Endothelial cell of umbilical vein (primary cell): ENCODE measurements at regions of chr3 and their contacts with region 1.

Region 1: GRCh38 chr3:185677146-185677829 is 91.2 kb downstream of the SENP2 start:
- DNase-seq: peak; percentile 81
- H3K4me3 ChIP-seq: no peak overlapping the region
- H3K27ac ChIP-seq: peak overlapping the region; percentile 36
- H3K4me1 ChIP-seq: peaks cover 7% of the 10 kb centered on the region
- H3K27me3 ChIP-seq: no peaks in the 10 kb centered on the region
- CTCF ChIP-seq: peak; percentile 67 to 70
- POLR2A ChIP-seq: no peak

Region 2: GRCh38 chr3:183868796-183869195 is 1808.5 kb before region 1 on chr3:
- CTCF ChIA-PET with region 1: no interaction called
- POLR2A ChIA-PET with region 1: no interaction called
- dilution Hi-C with region 1: no loop called
- intact Hi-C with region 1: no loop called
- DNase-seq: no peak
- H3K4me3 ChIP-seq: no peak overlapping the region
- H3K27ac ChIP-seq: no peak overlapping the region
- H3K4me1 ChIP-seq: no peaks in the 10 kb centered on the region
- H3K27me3 ChIP-seq: no peaks in the 10 kb centered on the region
- CTCF ChIP-seq: no peak
- POLR2A ChIP-seq: no peak

Region 3: DNA sequence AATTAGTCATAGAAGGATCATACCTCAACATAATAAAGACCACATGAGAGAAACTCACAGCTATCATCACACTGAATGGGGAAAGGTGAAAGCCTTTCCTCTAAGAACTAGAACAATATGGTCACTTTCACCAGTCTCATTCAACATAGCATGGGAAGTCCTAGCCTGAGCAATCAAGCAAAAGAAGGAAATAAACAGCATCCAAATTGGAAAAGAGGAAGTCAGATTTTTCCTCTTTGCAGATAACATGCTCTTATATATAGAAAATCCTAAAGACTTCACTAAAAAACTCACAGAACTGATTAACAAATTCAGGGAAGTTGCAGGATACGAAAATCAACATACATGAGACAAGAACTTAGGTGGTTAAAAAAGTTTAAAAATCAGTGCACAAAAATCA is 289.6 kb before region 1 on chr3:
- CTCF ChIA-PET with region 1: no interaction called
- POLR2A ChIA-PET with region 1: no interaction called
- dilution Hi-C with region 1: no loop called
- intact Hi-C with region 1: no loop called
- DNase-seq: no peak
- H3K4me3 ChIP-seq: no peak overlapping the region
- H3K27ac ChIP-seq: no peak overlapping the region
- H3K4me1 ChIP-seq: no peaks in the 10 kb centered on the region
- H3K27me3 ChIP-seq: no peaks in the 10 kb centered on the region
- CTCF ChIP-seq: no peak
- POLR2A ChIP-seq: no peak

Region 4: DNA sequence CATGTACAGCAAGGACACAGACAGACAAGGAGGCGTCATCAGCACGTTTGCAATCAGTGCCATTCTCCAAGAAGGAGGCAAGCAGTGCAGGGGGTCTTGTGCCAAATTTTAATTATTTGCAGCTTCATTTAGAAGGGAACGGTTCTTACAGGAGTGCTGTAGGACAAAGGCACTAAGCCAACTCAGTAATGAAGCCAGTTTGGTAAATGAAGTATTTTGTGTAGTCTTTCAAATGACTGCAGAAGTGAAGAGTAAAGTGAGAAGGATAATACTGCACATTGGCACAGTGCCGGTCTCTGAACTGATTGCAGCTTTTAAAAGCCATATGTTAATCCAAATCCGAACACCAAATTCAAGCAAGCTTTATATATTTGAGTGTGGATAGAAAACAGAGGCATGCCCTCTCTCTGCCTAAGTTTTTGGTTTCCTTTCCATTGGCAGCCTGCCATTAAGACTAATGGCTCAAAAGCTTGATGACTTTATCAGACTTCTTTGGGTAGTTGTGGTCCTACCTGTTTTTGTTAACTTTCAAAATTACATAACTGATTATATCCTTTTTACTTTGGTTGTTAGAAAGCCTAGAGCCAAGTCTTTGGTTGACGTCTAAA is 10.1 kb after region 1 on chr3:
- CTCF ChIA-PET with region 1: interaction called, 29 read pairs
- POLR2A ChIA-PET with region 1: no interaction called
- dilution Hi-C with region 1: no loop called
- intact Hi-C with region 1: loop called (anchors 1 kb)
- DNase-seq: no peak
- H3K4me3 ChIP-seq: no peak overlapping the region
- H3K27ac ChIP-seq: peak overlapping the region; percentile 93
- H3K4me1 ChIP-seq: peaks cover 19% of the 10 kb centered on the region
- H3K27me3 ChIP-seq: no peaks in the 10 kb centered on the region
- CTCF ChIP-seq: no peak
- POLR2A ChIP-seq: no peak

Region 5: DNA sequence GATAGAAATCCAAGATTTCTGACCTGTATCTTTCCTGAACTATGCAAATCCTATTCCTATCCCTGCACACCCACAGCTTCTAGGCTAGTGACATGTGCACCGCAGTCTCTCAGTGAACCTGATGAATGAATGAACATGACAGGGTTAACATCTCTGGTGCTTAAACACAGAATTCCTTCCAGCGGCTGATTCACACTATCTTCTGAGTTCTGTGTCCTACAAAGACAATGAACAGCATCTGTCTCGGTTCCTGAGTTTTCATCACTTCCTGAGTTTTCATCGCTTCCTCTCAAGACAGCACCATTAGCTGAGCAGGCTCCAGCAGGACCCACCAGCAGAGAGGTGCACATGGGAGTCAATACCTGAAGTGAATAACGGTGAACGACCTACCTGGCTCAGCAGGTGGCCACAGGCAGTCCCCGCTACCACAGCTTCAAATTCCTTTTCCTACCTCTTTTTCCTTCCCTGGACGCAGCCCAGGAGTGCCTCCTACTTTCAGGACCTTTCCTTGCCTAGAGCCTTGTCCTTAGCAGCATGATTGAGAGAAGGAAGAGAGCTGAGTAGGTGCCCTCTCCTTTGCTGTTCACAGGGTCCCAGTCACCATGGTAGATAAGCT is 34.1 kb after region 1 on chr3:
- CTCF ChIA-PET with region 1: interaction called, 26 read pairs
- POLR2A ChIA-PET with region 1: no interaction called
- dilution Hi-C with region 1: no loop called
- intact Hi-C with region 1: no loop called
- DNase-seq: peak; percentile 48
- H3K4me3 ChIP-seq: no peak overlapping the region
- H3K27ac ChIP-seq: peak overlapping the region; percentile 61
- H3K4me1 ChIP-seq: peaks cover 36% of the 10 kb centered on the region
- H3K27me3 ChIP-seq: no peaks in the 10 kb centered on the region
- CTCF ChIP-seq: no peak
- POLR2A ChIP-seq: no peak

Region 6: GRCh38 chr3:185733980-185734724 is 56.9 kb after region 1 on chr3:
- CTCF ChIA-PET with region 1: interaction called, 114 read pairs
- POLR2A ChIA-PET with region 1: no interaction called
- dilution Hi-C with region 1: no loop called
- intact Hi-C with region 1: loop called (anchors 1 kb)
- DNase-seq: peak; percentile 87
- H3K4me3 ChIP-seq: no peak overlapping the region
- H3K27ac ChIP-seq: peak overlapping the region; percentile 100
- H3K4me1 ChIP-seq: peaks cover 93% of the 10 kb centered on the region
- H3K27me3 ChIP-seq: no peaks in the 10 kb centered on the region
- CTCF ChIP-seq: peak; percentile 56 to 62
- POLR2A ChIP-seq: no peak

Region 7: DNA sequence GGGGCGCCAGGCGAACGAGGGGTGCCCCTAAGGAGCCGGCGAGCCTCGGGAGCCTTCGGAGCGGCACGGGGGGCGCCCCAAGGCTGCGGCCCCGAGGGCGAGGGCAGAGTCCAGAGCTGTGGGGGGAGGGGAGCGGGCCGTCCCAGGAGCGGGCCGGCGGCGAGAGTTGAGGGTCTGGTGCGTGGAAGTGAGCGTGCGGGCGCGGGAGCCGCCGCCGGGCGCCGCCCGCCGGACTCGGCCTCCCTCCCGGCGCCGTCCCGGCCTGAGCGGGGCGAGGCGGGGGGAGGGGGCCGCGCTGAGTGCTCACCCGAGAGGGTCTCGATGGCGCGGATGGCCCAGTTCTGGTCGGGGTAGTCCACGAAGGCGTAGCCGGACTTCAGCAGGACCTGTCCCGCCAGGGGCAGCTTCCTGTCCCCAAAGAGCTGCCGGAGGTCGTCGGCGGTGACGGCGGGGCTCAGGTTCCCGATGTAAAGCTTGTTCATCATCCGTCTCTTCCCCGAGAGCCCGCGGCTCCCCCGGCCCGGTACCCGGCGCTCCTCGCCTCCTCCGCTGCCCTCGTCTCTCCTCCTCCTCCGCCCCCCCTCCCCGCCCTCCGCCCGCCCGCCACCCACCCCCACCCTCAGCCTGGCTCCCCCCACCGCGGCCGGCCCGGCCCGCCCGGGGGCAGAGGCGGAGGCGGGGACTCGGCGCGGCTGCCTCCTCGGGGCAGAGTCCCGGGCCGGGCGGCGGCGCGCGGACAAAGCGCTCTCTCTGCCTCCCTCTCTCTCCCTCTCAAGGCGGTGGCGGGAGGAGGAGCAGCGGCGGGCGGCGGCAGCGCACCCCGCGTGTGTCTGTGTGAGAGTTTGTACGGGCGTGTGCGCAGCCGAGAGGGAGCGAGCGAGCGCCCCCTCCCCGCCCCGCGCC is 147.4 kb after region 1 on chr3 and contains the start of gene IGF2BP2:
- CTCF ChIA-PET with region 1: interaction called, 29 read pairs
- POLR2A ChIA-PET with region 1: interaction called, 3 read pairs
- dilution Hi-C with region 1: no loop called
- intact Hi-C with region 1: loop called (anchors 1 kb)
- DNase-seq: peak; percentile 84
- H3K4me3 ChIP-seq: peak within 1 kb of the TSS; percentile 87 to 100 (median 98)
- H3K27ac ChIP-seq: peak within 1 kb of the TSS; percentile 84
- H3K4me1 ChIP-seq: peaks cover 32% of the 10 kb centered on the region
- H3K27me3 ChIP-seq: no peaks in the 10 kb centered on the region
- CTCF ChIP-seq: peak in 1 of 2 donors; percentile 11
- POLR2A ChIP-seq: peak; percentile 69
- total RNA-seq, gene IGF2BP2: 122 and 130 TPM in 2 replicates

Region 8: DNA sequence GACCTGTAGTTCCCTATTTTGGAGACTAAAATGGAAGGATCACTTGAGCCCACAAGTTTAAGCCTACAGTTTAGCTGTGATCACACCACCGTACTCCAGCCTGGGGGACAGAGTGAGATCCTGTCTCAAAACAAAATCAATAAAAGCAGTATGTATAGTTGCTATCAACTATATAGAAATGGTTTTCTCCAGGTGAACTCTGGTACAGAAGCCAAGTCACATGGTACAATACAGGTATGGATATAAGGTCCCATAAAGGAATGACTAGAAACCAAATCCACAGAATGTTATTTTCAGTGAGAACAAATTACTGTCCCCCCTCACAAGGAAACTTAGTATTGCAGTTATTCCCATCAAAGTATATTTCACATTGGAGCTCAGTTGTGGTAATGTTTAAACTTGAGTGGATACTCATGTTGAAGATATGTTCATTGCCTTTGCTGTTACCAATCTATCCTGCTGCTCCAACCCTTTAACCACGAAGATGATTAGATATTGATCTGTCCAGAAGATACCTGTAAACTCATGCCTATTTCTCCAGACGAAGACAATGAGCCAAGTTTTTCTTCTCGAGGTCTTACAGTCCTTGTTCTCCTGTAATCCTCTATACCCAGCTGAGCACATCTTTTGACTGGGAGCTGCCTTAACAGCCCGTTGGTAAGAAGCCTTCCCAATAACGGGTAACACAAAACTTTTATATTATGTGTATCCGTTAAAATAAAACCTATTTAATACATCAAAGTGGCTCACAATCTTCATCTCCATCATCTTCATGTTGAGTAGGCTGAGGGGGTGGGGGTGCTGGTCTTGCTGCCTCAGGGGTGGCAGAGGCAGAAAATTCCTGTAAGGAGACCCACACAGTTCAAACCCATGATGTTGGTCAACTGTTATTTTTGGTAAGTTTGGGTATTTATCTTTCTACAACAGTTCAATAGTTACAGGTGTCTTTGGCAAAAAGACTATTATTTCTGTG is 235.9 kb after region 1 on chr3:
- CTCF ChIA-PET with region 1: interaction called, 13 read pairs
- POLR2A ChIA-PET with region 1: no interaction called
- dilution Hi-C with region 1: no loop called
- intact Hi-C with region 1: no loop called
- DNase-seq: no peak
- H3K4me3 ChIP-seq: no peak overlapping the region
- H3K27ac ChIP-seq: no peak overlapping the region
- H3K4me1 ChIP-seq: no peaks in the 10 kb centered on the region
- H3K27me3 ChIP-seq: no peaks in the 10 kb centered on the region
- CTCF ChIP-seq: no peak
- POLR2A ChIP-seq: peak; percentile 65

Region 9: DNA sequence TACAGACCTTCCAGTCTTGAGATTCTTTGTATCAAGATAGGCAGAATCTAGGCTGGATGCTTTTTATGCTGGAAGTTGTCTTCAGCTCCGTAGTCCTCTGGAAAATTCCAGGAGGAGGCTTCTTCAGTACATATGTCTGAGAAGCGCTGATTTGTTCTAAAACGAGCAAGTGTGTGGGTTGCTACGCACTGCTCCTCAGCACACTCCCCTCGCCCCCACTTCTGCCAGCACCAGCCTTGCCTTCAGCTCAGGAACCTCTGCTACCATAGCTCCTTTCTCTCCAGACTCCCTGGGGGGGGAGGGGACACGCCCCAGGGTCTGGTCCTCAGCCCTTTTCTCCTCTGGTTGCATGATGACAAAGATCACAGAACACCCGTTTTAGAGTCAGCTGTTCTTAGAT is 336.0 kb after region 1 on chr3:
- CTCF ChIA-PET with region 1: no interaction called
- POLR2A ChIA-PET with region 1: no interaction called
- dilution Hi-C with region 1: no loop called
- intact Hi-C with region 1: no loop called
- DNase-seq: no peak
- H3K4me3 ChIP-seq: no peak overlapping the region
- H3K27ac ChIP-seq: no peak overlapping the region
- H3K4me1 ChIP-seq: no peaks in the 10 kb centered on the region
- H3K27me3 ChIP-seq: no peaks in the 10 kb centered on the region
- CTCF ChIP-seq: no peak
- POLR2A ChIP-seq: no peak